AG04450 (cell line): ENCODE measurements at regions of chr3 and their contacts with region 1.

Region 1: GRCh38 chr3:5160928-5161858 is 26.3 kb upstream of the EDEM1 start:
- DNase-seq: no peak
- H3K4me3 ChIP-seq: no peak overlapping the region
- H3K27ac ChIP-seq: no peak overlapping the region
- H3K27me3 ChIP-seq: no peaks in the 10 kb centered on the region
- CTCF ChIP-seq: no peak

Region 2: DNA sequence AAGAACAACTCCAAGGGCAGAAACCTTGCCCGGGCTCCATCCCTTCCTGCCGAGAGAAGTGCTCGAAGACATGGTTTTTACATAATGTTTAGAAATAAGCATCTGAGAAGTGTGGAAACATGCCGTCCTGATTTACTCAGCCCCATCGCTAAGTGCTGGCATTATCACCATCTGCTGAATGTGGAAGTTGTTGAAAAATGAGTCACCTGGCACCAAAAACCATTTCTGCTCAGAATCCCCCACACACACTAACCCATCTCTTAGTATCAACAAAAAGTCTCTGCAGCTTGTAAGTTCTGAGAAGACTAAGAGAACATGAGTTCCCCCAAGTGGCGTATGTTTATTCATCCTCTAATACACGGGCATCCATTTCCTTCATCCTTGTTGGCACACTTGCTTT is 90.1 kb before region 1 on chr3:
- CTCF ChIA-PET with region 1: no interaction called
- POLR2A ChIA-PET with region 1: interaction called, 10 read pairs
- DNase-seq: no peak
- H3K4me3 ChIP-seq: no peak overlapping the region
- H3K27ac ChIP-seq: no peak overlapping the region
- H3K27me3 ChIP-seq: peaks cover 11% of the 10 kb centered on the region
- CTCF ChIP-seq: no peak